ENCODE measurements at regions of chr17 and their contacts with region 1.

Region 1: GRCh38 chr17:59106463-59107305 is at the start of gene TRIM37:
- DNase-seq: peak; percentile 99
- ATAC-seq: peak; percentile 98
- H3K4me3 ChIP-seq: peak within 1 kb of the TSS; percentile 90 to 96 (median 94)
- H3K27ac ChIP-seq: peak within 1 kb of the TSS; percentile 84
- H3K4me1 ChIP-seq: peaks cover 36% of the 10 kb centered on the region
- H3K27me3 ChIP-seq: no peaks in the 10 kb centered on the region; a peak in 1 of 5 replicates
- CTCF ChIP-seq: peak; percentile 53
- EP300 ChIP-seq: 0 out of 4 replicates have a peak, but pooled peaks of 1 of the 2 experiments have one; percentile 14
- POLR2A ChIP-seq: peak in 1 of 2 experiments; percentile 74
- RAD21 ChIP-seq: peak; percentile 55
- total RNA-seq, gene TRIM37: 39.1 and 48.1 TPM in 2 replicates

Region 2: DNA sequence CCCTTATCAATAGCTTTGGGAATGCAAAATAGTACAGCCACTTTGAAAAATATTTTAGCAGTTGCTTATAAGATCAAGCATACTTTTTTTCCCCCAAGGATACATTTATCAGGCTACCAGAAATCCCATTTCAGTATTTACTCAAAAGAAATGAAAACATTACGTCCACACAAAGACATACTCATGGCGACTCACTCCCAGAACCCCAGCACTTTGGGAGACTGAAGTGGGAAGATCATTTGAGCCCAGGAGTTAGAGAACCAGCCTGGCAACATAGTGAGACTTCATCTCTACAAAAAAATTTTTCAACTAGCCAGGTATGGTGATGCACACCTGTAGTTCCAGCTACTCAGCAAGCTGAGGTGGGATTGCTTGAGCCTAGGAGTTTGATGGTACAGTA is 42.4 kb after region 1 on chr17:
- CTCF ChIA-PET with region 1: no interaction called
- POLR2A ChIA-PET with region 1: interaction called, 21 read pairs
- in situ Hi-C with region 1: loop called (anchors 5 kb)
- intact Hi-C with region 1: no loop called
- DNase-seq: no peak
- ATAC-seq: no peak
- H3K4me3 ChIP-seq: no peak overlapping the region
- H3K27ac ChIP-seq: no peak overlapping the region
- H3K4me1 ChIP-seq: peaks cover 56% of the 10 kb centered on the region
- H3K27me3 ChIP-seq: no peaks in the 10 kb centered on the region; a peak in 1 of 5 replicates
- CTCF ChIP-seq: no peak
- EP300 ChIP-seq: no peak
- POLR2A ChIP-seq: no peak
- RAD21 ChIP-seq: no peak

Region 3: GRCh38 chr17:59155439-59156182 is 48.9 kb after region 1 on chr17 and contains the start of gene PRR11:
- CTCF ChIA-PET with region 1: no interaction called
- POLR2A ChIA-PET with region 1: interaction called, 21 read pairs
- in situ Hi-C with region 1: no loop called
- intact Hi-C with region 1: loop called (anchors 1 kb)
- DNase-seq: peak; percentile 100
- ATAC-seq: peak; percentile 94
- H3K4me3 ChIP-seq: peak within 1 kb of the TSS; percentile 83 to 95 (median 89)
- H3K27ac ChIP-seq: peak within 1 kb of the TSS; percentile 95
- H3K4me1 ChIP-seq: peaks cover 60% of the 10 kb centered on the region
- H3K27me3 ChIP-seq: no peaks in the 10 kb centered on the region; a peak in 1 of 5 replicates
- CTCF ChIP-seq: no peak
- EP300 ChIP-seq: no peak
- POLR2A ChIP-seq: peak in 1 of 2 experiments; percentile 66; a peak in 2 of 4 replicates
- RAD21 ChIP-seq: no peak
- total RNA-seq, gene PRR11: 39.2 and 50.4 TPM in 2 replicates